Mammary epithelial cell (primary cell): ENCODE measurements at regions of chrX and their contacts with region 1.

Region 1: DNA sequence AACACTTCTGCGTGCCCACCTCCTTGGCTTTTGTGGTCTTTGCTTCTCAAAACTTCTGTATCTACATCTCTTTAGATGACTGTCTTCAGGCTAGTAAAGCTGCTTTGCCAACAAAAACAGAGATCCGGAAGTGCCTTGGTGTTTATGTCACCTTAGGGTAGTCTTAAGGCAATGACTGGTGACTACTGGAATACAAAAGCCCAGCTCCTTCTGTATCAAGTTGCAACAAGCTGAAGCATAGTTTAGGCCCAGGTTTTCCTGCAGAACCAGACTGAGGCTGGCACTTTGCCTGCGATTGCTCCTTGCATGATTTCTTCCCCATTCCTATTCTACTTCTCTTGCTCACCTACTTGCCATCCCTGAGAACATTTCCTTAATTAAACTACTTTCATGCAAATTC is 333.8 kb downstream of the DMD start:
- DNase-seq: peak; percentile 87
- H3K4me3 ChIP-seq: no peak overlapping the region
- H3K27ac ChIP-seq: no peak overlapping the region
- H3K4me1 ChIP-seq: peaks cover 26% of the 10 kb centered on the region
- H3K27me3 ChIP-seq: no peaks in the 10 kb centered on the region
- CTCF ChIP-seq: no peak

Region 2: GRCh38 chrX:33204889-33205288 is 327.3 kb after region 1 on chrX:
- CTCF ChIA-PET with region 1: no interaction called
- dilution Hi-C with region 1: no loop called
- in situ Hi-C with region 1: no loop called
- intact Hi-C with region 1: loop called (anchors 10 kb)
- DNase-seq: peak; percentile 78
- H3K4me3 ChIP-seq: peak overlapping the region in 2 of 3 experiments; percentile 14 to 44
- H3K27ac ChIP-seq: peak overlapping the region; percentile 68
- H3K4me1 ChIP-seq: peaks cover 4% of the 10 kb centered on the region
- H3K27me3 ChIP-seq: no peaks in the 10 kb centered on the region
- CTCF ChIP-seq: no peak